ENCODE measurements at regions of chr11 and their contacts with region 1.

Region 1: DNA sequence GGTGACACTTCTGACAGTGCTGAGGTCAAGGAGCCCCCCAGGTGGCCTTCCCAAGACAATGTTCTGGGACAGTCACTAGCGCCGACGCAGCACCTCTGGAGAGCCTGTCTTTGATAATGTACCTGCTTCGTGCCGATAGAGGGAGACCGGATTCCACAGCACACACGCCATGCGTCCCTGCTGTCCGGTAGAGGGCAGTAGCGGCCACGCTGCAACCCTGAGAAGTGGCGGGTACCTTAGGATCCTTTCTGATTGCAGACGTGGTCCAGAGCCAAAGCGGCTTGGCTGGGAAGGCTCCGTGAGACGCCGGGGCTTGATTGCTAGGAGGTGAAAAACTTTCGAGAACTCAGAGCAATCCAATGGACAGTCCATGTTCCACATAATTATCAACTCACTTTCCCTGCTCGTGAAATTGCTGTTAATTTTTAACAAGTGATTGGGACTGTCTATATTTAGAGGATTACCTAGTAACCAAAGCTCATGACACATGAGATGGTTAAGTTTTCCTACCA is 11.4 kb upstream of the BARX2 start:
- DNase-seq: peak; percentile 82 to 88 (median 85)
- ATAC-seq: peak; percentile 97
- H3K4me3 ChIP-seq: no peak overlapping the region
- H3K4me1 ChIP-seq: peaks cover 4% of the 10 kb centered on the region
- CTCF ChIP-seq: peak; percentile 95

Region 2: GRCh38 chr11:129209891-129210830 is 154.0 kb before region 1 on chr11:
- intact Hi-C with region 1: no loop called
- DNase-seq: no peak
- ATAC-seq: peak; percentile 43
- H3K4me3 ChIP-seq: no peak overlapping the region
- H3K4me1 ChIP-seq: peaks cover 6% of the 10 kb centered on the region
- CTCF ChIP-seq: no peak

Region 3: GRCh38 chr11:129695575-129696308 is 331.5 kb after region 1 on chr11:
- intact Hi-C with region 1: loop called in 1 of 2 experiments (anchors 10 kb)
- DNase-seq: peak; percentile 68 to 87 (median 84)
- ATAC-seq: peak; percentile 97
- H3K4me3 ChIP-seq: no peak overlapping the region
- H3K4me1 ChIP-seq: no peaks in the 10 kb centered on the region
- CTCF ChIP-seq: peak; percentile 85

Region 4: DNA sequence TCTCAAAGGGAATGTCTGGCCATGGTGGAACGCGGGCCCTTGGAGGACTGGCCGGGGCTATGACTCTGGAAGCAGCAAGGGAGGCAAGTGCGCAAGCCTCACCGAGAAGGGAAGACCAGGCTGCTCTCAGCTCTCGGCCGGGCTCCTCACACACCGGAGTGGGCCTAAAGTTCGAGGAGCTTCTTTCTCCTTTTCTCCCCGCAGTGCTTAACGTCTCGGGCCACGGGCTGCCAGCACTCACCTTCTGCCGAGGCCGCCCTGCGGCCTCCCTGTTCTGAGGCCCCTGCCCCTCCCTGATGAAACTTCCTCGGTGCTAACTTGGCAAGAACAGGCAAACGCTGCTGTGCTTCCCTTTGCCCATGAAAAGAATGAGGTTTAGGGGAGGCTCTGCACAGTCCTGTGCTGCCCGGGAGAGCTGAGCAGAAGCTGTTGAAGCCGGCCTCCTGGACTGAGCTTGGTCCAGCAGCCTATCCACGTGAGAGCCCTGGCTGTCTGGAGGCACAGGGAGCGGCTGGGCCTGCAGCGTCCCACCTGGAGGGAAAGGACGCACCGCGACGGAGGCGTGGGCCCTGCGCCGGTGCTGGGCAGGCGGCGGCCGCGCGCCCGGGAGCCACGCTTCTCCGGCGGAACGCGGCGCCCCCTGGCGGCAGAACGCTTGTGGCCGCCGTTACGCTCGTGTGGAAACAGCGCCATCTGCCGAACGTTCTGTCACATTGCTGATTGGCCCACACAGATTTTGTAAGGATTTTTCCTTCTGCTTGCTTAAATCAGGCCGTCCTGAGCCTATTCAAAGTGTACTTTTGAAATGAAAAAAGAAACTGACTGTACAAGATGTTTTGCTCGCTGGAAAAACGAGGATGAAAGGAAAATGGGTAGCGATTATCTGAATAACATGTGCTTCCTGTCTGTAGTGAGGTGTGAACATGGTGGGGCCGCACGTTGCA is 386.4 kb after region 1 on chr11:
- intact Hi-C with region 1: loop called in 1 of 2 experiments (anchors 10 kb)
- DNase-seq: peak; percentile 77 to 81 (median 80)
- ATAC-seq: peak; percentile 100
- H3K4me3 ChIP-seq: no peak overlapping the region
- H3K4me1 ChIP-seq: peaks cover 7% of the 10 kb centered on the region
- CTCF ChIP-seq: peak; percentile 98

Measured in mucosa of descending colon (tissue), 3 donors.